WTC11 (cell line): ENCODE measurements at regions of chr16 and their contacts with region 1.

Region 1: GRCh38 chr16:89909777-89910716 is 8.6 kb upstream of the MC1R start:
- DNase-seq: peak; percentile 84
- ATAC-seq: peak; percentile 91
- H3K4me3 Mint-ChIP-seq: no peak overlapping the region
- H3K27ac Mint-ChIP-seq: peak overlapping the region; percentile 70; the same call in 1 of the 2 replicates
- H3K4me1 Mint-ChIP-seq: no peaks in the 10 kb centered on the region
- H3K27me3 Mint-ChIP-seq: no peaks in the 10 kb centered on the region
- CTCF ChIP-seq: peak; percentile 83

Region 2: GRCh38 chr16:89678258-89678657 is 231.8 kb before region 1 on chr16:
- CTCF ChIA-PET with region 1: no interaction called
- POLR2A ChIA-PET with region 1: no interaction called
- DNase-seq: no peak
- ATAC-seq: no peak
- H3K4me3 Mint-ChIP-seq: no peak overlapping the region
- H3K27ac Mint-ChIP-seq: no peak overlapping the region
- H3K4me1 Mint-ChIP-seq: no peaks in the 10 kb centered on the region
- H3K27me3 Mint-ChIP-seq: peaks cover 2% of the 10 kb centered on the region
- CTCF ChIP-seq: no peak

Region 3: GRCh38 chr16:89700100-89700648 is 209.9 kb before region 1 on chr16:
- CTCF ChIA-PET with region 1: interaction called, 10 read pairs
- POLR2A ChIA-PET with region 1: no interaction called
- DNase-seq: peak; percentile 100
- ATAC-seq: peak; percentile 59
- H3K4me3 Mint-ChIP-seq: peak overlapping the region; percentile 64
- H3K27ac Mint-ChIP-seq: no peak overlapping the region; the same call in 1 of the 2 replicates
- H3K4me1 Mint-ChIP-seq: peaks cover 12% of the 10 kb centered on the region
- H3K27me3 Mint-ChIP-seq: peaks cover 25% of the 10 kb centered on the region
- CTCF ChIP-seq: no peak

Region 4: GRCh38 chr16:89860747-89861304 is 49.2 kb before region 1 on chr16:
- CTCF ChIA-PET with region 1: interaction called, 12 read pairs
- POLR2A ChIA-PET with region 1: no interaction called
- DNase-seq: peak; percentile 91
- ATAC-seq: peak; percentile 98
- H3K4me3 Mint-ChIP-seq: no peak overlapping the region
- H3K27ac Mint-ChIP-seq: no peak overlapping the region
- H3K4me1 Mint-ChIP-seq: no peaks in the 10 kb centered on the region
- H3K27me3 Mint-ChIP-seq: no peaks in the 10 kb centered on the region
- CTCF ChIP-seq: peak; percentile 99

Region 5: GRCh38 chr16:89898201-89898967 is 11.7 kb before region 1 on chr16:
- CTCF ChIA-PET with region 1: interaction called, 19 read pairs
- POLR2A ChIA-PET with region 1: no interaction called
- DNase-seq: no peak
- ATAC-seq: no peak
- H3K4me3 Mint-ChIP-seq: no peak overlapping the region
- H3K27ac Mint-ChIP-seq: no peak overlapping the region
- H3K4me1 Mint-ChIP-seq: no peaks in the 10 kb centered on the region
- H3K27me3 Mint-ChIP-seq: no peaks in the 10 kb centered on the region
- CTCF ChIP-seq: no peak

Region 6: GRCh38 chr16:89945670-89946069 is 35.6 kb after region 1 on chr16:
- CTCF ChIA-PET with region 1: interaction called, 17 read pairs
- POLR2A ChIA-PET with region 1: no interaction called
- DNase-seq: peak; percentile 43
- ATAC-seq: peak; percentile 5; the same call in 1 of the 2 replicates
- H3K4me3 Mint-ChIP-seq: no peak overlapping the region
- H3K27ac Mint-ChIP-seq: no peak overlapping the region
- H3K4me1 Mint-ChIP-seq: peaks cover 6% of the 10 kb centered on the region; the same call in 1 of the 2 replicates
- H3K27me3 Mint-ChIP-seq: peaks cover 49% of the 10 kb centered on the region
- CTCF ChIP-seq: no peak